ENCODE measurements at regions of chr5 and their contacts with region 1.

Region 1: DNA sequence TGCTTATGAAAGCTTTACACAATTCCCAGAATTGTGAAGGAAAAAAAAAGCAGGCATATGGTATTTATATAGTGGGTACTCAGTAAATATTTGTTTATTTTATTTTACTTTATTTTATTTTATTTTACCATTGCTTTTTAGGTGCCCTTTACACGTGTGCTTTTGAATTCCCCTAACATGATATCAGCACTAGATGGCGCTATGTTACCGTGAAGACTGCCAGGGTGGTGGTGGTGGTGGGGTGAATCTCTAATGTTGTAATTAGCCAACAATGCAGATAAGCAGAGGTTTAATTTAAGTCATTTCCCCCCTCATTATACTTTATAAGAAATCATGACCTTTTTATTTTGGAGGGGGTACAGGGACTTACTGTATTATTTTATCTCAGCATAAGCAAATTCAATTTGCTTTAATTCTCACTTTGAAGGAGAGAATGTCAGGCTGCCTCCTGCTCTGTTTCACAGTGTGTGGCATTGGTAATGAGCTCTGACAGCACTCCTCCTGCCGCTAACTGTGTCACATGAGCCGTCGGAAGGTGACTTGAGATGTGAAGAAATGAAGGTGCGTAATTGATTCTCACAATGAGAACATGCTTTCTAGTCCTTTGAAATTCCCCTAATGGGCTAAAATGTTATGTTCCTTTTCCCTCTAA is 165.6 kb downstream of the YTHDC2 start:
- DNase-seq: peak; percentile 11
- H3K4me3 ChIP-seq: no peak overlapping the region
- CTCF ChIP-seq: peak; percentile 76

Region 2: DNA sequence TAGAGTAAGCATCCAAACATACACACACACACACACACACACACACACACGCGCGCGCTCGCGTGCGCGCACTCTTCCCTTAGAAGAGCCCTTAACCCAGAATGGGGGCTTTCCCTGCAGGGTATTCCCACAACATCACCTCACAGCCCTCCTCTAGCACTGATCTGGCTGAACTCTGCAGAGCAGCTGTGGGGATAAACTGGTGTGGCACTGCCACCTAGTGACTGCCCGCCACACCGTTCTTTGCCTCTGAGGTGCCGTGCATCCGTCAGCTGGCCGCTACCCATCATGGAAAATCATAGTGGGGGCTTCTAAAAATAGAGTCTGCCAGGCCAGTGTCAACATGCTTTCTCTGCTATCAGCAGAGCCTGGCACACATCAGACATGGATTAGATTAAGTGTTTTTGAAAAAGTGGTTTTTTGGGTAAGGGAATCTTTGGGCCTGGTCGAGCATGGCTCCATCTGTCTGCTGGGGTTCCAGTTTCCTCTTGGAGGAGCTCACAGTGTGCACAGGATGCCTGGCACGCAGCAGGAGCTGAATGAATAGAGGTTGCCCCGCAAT is 770.9 kb after region 1 on chr5:
- in situ Hi-C with region 1: loop called (anchors 25 kb)
- DNase-seq: peak; percentile 11
- H3K4me3 ChIP-seq: no peak overlapping the region
- CTCF ChIP-seq: peak; percentile 82